ENCODE measurements at regions of chr11 and their contacts with region 1.

Region 1: DNA sequence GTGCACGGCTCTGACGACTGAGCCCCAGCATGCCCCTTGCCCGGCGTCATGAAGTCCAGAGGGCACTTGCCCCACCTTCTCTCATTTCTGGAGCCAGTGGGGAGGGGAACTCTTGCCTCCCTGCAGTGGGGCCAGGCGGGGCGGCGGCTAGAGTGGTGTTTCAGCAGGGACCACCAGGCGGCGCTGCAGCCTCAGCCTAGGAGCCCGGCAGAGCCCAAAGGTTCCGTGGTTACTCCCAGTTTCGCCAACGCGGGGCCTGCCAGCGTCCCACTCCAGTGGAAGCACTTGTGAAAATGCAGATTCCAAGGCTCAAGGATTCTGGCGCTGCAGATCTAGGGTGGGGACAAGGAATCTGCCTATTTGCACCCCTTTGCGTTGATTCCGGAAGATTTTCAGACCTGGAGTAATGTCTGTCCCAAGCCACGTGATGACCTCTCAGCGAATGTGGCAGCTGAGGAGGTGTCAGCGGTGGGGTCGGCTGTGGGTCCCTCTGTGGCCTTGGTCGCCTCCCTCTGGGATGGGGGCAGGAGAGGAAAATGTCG is 55.7 kb downstream of the CD82 start:
- DNase-seq: no peak
- ATAC-seq: peak; percentile 86
- H3K4me3 ChIP-seq: peak overlapping the region in 1 of 2 experiments; percentile 30; a peak in 1 of 4 replicates
- H3K27ac ChIP-seq: no peak overlapping the region
- H3K4me1 ChIP-seq: no peaks in the 10 kb centered on the region
- H3K27me3 ChIP-seq: no peaks in the 10 kb centered on the region
- CTCF ChIP-seq: peak; percentile 98

Region 2: GRCh38 chr11:44538375-44539054 is 82.7 kb before region 1 on chr11:
- CTCF ChIA-PET with region 1: interaction called, 10 read pairs
- POLR2A ChIA-PET with region 1: no interaction called
- in situ Hi-C with region 1: no loop called
- intact Hi-C with region 1: no loop called
- DNase-seq: no peak
- ATAC-seq: peak; percentile 97
- H3K4me3 ChIP-seq: no peak overlapping the region
- H3K27ac ChIP-seq: no peak overlapping the region
- H3K4me1 ChIP-seq: no peaks in the 10 kb centered on the region; the same call in 1 of the 2 replicates
- H3K27me3 ChIP-seq: no peaks in the 10 kb centered on the region
- CTCF ChIP-seq: peak; percentile 94

Region 3: DNA sequence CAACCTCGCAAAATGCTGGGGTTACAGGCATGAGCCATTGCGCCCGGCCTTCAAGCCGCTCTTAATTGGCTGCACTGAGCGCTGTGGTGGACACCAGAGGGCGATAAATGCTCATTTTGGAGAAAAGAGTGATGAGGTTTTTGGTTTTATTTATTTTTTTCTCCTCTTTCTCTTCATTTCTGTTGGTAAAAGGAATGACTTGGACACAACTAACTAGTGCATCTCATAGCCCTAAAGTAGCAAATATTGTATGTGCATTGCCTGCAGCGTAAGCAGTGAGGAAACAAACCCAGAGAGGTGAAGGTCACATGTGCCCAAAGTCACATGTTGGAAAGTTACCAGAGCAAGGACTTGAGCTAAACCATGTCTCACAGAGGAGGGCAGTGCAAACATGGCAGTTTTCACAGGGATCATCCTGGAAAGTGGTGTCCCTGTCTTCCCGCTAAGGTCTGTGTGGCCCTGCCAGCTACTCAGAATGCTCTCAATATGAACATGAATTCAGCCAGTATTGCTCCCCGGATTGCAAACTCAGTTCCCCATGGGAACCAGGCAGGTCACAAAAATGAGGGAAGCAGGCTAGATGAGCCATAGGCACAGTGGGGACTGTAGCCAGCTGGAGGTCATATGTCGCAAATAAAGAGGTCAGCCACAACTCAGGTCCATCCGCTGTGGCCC is 64.3 kb before region 1 on chr11:
- CTCF ChIA-PET with region 1: interaction called, 20 read pairs
- POLR2A ChIA-PET with region 1: interaction called, 3 read pairs
- in situ Hi-C with region 1: no loop called
- intact Hi-C with region 1: loop called (anchors 1 kb)
- DNase-seq: no peak
- ATAC-seq: peak; percentile 87
- H3K4me3 ChIP-seq: no peak overlapping the region
- H3K27ac ChIP-seq: no peak overlapping the region
- H3K4me1 ChIP-seq: 0 out of 2 replicates have a peak, but pooled peaks cover 2% of the 10 kb centered on the region
- H3K27me3 ChIP-seq: no peaks in the 10 kb centered on the region
- CTCF ChIP-seq: peak; percentile 88

Region 4: GRCh38 chr11:44565211-44565952 is 55.8 kb before region 1 on chr11 and contains the start of gene CD82:
- CTCF ChIA-PET with region 1: interaction called, 14 read pairs
- POLR2A ChIA-PET with region 1: interaction called, 3 read pairs
- in situ Hi-C with region 1: no loop called
- intact Hi-C with region 1: no loop called
- DNase-seq: peak; percentile 69
- ATAC-seq: peak; percentile 97
- H3K4me3 ChIP-seq: peak within 1 kb of the TSS; percentile 63 to 85
- H3K27ac ChIP-seq: peak within 1 kb of the TSS; percentile 85
- H3K4me1 ChIP-seq: peaks cover 16% of the 10 kb centered on the region
- H3K27me3 ChIP-seq: no peaks in the 10 kb centered on the region
- CTCF ChIP-seq: no peak
- total RNA-seq, gene CD82: 26.1 TPM

Region 5: DNA sequence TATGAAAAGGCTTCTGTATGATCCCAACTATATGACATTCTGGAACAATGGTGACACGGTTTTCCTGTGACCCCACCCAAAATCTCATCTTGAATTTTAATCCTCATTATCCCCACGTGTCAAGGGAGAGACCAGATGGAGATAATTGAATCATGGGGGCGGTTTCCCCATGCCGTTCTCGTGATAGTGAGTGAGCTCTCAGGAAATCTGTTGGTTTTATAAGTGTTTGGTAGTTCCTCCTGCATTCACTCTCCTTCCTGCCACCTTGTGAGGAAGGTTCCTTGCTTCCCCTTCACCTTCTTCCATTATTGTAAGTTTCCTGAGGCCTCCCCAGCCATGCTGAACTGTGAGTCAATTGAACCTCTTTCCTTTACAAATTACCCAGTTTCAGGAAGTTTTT is 52.5 kb after region 1 on chr11:
- CTCF ChIA-PET with region 1: interaction called, 10 read pairs
- POLR2A ChIA-PET with region 1: no interaction called
- in situ Hi-C with region 1: no loop called
- intact Hi-C with region 1: no loop called
- DNase-seq: no peak
- ATAC-seq: no peak
- H3K4me3 ChIP-seq: no peak overlapping the region
- H3K27ac ChIP-seq: no peak overlapping the region
- H3K4me1 ChIP-seq: no peaks in the 10 kb centered on the region
- H3K27me3 ChIP-seq: peaks cover 8% of the 10 kb centered on the region; the same call in 1 of the 2 replicates
- CTCF ChIP-seq: no peak

Region 6: DNA sequence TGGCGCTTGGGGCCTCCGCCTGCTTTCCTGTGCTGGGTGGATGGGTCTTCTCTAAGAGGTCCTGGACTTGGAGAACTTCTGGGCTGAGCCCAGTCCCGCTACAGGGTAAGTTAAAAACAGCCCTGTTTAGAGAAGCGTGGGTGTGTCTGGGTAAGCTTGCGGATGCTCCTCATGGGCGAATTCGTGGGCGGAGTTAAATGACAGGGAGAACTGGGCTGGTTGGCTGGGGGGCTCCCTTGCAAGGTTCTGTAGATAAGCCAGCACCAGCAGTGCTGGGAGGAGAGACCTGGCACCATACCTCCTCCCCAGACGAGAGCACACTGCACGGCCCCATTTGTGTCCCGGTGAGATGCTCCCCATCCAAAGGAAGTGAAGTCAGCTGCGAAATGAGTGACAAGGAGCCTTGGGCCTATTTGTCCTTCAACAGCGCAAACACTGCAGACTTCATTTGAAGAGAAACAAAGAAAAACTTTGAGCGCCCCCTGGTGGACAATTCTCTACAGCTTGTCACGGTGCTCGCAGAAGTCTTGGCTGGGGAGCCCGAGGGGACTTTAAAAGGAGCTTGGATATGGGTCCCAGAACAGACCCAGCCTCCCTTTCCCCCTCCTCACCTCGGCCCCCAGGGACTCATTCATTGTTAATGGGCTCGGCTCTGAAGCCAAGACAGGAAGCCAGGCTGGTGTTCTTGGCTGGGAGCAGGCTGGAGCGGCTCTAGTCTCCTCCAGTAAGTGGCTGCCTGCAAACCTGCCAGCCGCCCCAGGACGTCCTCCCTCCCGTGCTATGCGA is 290.0 kb after region 1 on chr11:
- CTCF ChIA-PET with region 1: interaction called, 10 read pairs
- POLR2A ChIA-PET with region 1: no interaction called
- in situ Hi-C with region 1: no loop called
- intact Hi-C with region 1: loop called (anchors 1 kb)
- DNase-seq: no peak
- ATAC-seq: peak; percentile 96
- H3K4me3 ChIP-seq: no peak overlapping the region
- H3K27ac ChIP-seq: no peak overlapping the region
- H3K4me1 ChIP-seq: peaks cover 3% of the 10 kb centered on the region; the same call in 1 of the 2 replicates
- H3K27me3 ChIP-seq: no peaks in the 10 kb centered on the region
- CTCF ChIP-seq: peak; percentile 85

Measured in Panc1 (cell line).